Activated T-helper 1 cell treated with anti-CD3 and anti-CD28 coated beads, Interleukin-12 subunit alpha, Interleukin-12 subunit beta, Interleukin-2, Interleukin-4 antibody, amounts not matched to agents 30 ng/mL and 10 ng/mL and 1 ng/mL, durations not matched to agents 14 hours and 24 hours and 36 hours (primary cell): ENCODE measurements at regions of chr5 and their contacts with region 1.

Region 1: DNA sequence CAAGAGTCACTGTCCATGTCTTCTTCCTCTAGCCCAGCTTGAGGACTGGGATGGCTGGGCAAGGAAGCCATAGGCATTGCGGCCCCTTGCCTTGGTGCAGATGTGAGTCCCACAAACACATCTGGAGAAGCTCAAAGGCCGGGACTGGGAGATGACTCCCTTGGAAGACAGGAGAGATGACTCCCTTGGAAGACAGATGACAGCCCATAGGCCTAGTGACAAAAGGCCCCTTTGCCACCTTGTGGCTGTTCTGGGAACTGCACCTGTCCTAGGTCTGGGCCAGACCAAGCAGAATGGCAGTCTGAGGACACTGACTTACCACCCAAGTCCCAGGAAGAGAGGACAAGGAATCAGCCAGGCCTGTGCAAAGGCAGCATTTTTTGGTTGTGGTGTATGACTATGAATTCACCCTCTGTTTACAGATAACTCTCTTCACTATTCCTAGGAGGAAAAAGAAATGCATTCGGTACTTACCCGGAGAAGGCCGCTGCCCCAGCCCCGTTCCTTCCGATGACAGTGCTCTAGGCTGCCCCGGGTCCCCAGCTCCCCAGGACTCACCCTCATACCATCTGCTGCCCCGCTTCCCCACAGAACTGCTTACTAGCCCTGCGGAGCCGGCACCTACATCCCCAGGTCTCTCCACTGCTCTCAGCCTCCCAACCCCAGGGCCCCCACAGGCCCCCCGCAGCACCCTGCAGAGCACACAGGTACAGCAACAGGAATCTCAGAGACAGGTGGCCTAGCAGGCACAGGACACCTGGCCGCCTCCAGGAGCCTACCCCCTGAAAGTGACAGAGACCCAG is 30.8 kb downstream of the SKP1 start:
- DNase-seq: peak; percentile 67
- H3K4me3 Mint-ChIP-seq: no peak overlapping the region
- H3K27ac Mint-ChIP-seq: peak overlapping the region; percentile 19
- H3K4me1 Mint-ChIP-seq: peaks cover 36% of the 10 kb centered on the region
- H3K27me3 Mint-ChIP-seq: no peaks in the 10 kb centered on the region

Region 2: DNA sequence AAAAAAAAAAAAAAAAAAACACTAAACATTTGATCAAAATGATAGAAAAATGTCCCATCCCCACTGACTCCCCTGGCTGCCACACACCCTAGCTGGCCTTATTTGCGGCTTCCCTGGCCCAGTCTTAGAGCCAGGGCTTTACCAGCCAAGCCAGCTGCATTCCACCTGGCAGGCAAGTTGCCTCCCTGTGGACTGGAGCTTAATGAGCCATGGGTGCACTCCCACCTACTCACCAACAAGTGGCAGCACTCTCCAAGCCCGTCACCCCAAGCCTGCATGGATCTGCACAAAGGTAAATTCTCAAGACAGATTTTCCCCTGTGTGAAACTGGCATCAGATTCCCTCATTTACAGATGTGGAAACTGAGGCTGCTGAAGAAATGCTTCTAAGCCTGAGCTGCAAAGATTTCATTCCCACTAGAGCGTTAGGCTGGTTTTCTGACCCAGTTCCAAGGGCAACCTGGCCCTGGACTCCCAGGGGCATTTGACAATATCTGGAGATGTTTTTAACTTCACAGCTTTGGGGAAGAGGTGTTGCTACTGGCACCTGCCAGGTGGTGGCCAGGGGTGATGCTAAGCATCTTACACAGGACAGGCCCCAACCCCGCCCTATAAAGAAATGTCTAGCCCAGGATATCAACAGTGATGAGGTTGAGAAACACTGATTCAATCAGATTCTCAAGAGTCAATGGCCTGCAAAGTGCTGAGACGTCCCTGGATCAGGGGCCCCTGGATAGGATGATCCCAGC is 119.3 kb before region 1 on chr5:
- intact Hi-C with region 1: loop called (anchors 1 kb)
- DNase-seq: peak; percentile 27
- H3K4me3 Mint-ChIP-seq: no peak overlapping the region
- H3K27ac Mint-ChIP-seq: no peak overlapping the region
- H3K4me1 Mint-ChIP-seq: no peaks in the 10 kb centered on the region
- H3K27me3 Mint-ChIP-seq: peaks cover 12% of the 10 kb centered on the region